ENCODE measurements at regions of chr7 and their contacts with region 1.

Region 1: GRCh38 chr7:66075590-66076461 is at the start of gene ASL:
- DNase-seq: peak; percentile 93
- H3K4me3 Mint-ChIP-seq: peak within 1 kb of the TSS; percentile 84
- H3K27ac Mint-ChIP-seq: peak within 1 kb of the TSS; percentile 23
- H3K4me1 Mint-ChIP-seq: no peaks in the 10 kb centered on the region
- H3K27me3 Mint-ChIP-seq: no peaks in the 10 kb centered on the region
- CTCF ChIP-seq: no peak
- total RNA-seq, gene ASL: 53.6 and 56.5 TPM in 2 replicates

Region 2: DNA sequence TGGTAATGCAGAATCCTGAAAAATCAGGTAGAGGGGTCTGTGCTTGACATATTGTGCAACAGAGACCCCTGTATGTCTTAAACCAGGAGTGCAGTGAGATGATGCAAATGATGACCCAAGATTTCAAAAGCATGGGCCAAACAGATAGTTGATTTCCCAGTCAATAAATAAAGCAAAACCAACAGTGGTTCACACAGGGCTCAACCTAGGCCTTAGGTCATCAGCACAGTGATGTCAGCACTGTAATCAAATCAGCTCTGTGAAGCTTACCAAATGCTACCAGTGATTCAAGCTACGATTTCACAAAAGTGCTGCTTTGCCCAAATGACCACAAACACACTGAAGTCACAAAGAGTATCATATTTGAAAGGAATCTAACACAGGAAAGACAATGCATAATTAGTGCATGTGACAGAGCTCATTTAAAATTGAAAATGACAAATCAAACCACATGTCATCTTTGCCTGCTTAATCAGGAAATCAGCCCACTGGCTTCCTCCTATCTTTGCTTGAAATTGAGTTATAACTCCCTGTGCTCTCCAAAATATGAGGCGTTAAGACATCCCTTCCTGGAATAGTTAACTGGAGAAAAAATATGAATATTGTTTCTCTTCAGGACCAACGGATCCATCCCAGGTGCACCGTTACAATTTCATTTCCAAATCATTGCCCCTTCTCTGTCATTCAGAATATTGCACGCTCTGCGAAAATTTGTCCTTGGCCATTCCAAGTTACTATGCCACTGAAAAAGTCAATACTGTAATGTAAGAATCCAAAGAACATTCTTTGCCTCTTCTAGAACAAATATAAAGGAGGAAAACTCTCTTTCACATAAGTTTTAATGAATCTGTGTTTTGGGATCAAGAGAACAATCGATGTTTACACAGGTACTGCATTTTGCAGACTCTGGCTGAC is 42.1 kb before region 1 on chr7:
- CTCF ChIA-PET with region 1: interaction called, 37 read pairs
- POLR2A ChIA-PET with region 1: interaction called, 4 read pairs
- intact Hi-C with region 1: no loop called
- DNase-seq: no peak
- H3K4me3 Mint-ChIP-seq: no peak overlapping the region
- H3K27ac Mint-ChIP-seq: no peak overlapping the region
- H3K4me1 Mint-ChIP-seq: no peaks in the 10 kb centered on the region
- H3K27me3 Mint-ChIP-seq: no peaks in the 10 kb centered on the region
- CTCF ChIP-seq: no peak

Region 3: GRCh38 chr7:66187905-66188304 is 112.1 kb after region 1 on chr7:
- CTCF ChIA-PET with region 1: no interaction called
- POLR2A ChIA-PET with region 1: no interaction called
- intact Hi-C with region 1: no loop called
- DNase-seq: no peak
- H3K4me3 Mint-ChIP-seq: no peak overlapping the region
- H3K27ac Mint-ChIP-seq: no peak overlapping the region
- H3K4me1 Mint-ChIP-seq: no peaks in the 10 kb centered on the region
- H3K27me3 Mint-ChIP-seq: no peaks in the 10 kb centered on the region
- CTCF ChIP-seq: no peak